Naive thymus-derived CD4-positive, alpha-beta T cell (primary cell): ENCODE measurements at regions of chr14 and their contacts with region 1.

Region 1: DNA sequence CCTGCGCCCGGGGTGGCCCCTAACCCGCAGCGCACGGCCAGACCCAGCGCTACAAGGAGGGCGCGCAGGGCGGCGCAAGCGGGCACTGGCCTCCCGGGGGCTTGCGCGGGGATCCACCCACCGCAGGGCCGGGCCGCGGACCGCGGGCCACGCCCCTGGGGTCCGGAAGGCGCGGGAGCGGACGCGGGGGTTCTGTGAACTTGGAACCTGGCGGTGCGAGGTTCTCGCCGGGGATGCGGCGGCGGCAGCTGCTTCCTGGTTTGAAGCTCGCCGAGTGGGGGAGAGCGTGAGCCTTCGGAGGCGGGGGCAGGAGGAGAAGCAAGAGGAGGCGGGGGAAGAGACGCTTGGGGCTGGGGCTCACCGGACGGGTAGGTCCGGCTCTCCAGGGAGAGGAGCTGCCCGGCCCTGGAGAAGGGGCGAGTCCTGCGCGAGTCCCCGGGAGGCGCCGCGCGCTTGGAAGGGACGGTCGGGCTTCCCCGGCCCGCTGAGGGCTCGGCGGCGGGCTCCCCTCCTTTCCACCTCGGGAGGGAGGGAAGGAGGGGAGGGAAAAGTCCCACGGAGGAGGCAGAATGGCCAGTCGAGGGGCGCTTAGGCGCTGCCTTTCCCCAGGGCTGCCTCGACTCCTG is at the start of gene PRKCH:
- DNase-seq: peak; percentile 67 to 87 (median 84)
- ATAC-seq: peak; percentile 87
- H3K4me3 ChIP-seq: peak within 1 kb of the TSS; percentile 90
- H3K4me3 Mint-ChIP-seq: peak within 1 kb of the TSS in 9 of 10 donors; percentile 95 to 100 (median 98)
- H3K27ac ChIP-seq: peak within 1 kb of the TSS; percentile 91
- H3K27ac Mint-ChIP-seq: peak within 1 kb of the TSS in 8 of 9 donors; percentile 93 to 99 (median 97)
- H3K4me1 ChIP-seq: peaks cover 20 to 22% of the 10 kb centered on the region in 2 donors
- H3K4me1 Mint-ChIP-seq: peaks cover 9 to 26% (median 25%) of the 10 kb centered on the region in 7 donors
- H3K27me3 ChIP-seq: no peaks in the 10 kb centered on the region
- H3K27me3 Mint-ChIP-seq: no peaks in the 10 kb centered on the region
- total RNA-seq, gene PRKCH: 224 to 359 (median 320) TPM

Region 2: DNA sequence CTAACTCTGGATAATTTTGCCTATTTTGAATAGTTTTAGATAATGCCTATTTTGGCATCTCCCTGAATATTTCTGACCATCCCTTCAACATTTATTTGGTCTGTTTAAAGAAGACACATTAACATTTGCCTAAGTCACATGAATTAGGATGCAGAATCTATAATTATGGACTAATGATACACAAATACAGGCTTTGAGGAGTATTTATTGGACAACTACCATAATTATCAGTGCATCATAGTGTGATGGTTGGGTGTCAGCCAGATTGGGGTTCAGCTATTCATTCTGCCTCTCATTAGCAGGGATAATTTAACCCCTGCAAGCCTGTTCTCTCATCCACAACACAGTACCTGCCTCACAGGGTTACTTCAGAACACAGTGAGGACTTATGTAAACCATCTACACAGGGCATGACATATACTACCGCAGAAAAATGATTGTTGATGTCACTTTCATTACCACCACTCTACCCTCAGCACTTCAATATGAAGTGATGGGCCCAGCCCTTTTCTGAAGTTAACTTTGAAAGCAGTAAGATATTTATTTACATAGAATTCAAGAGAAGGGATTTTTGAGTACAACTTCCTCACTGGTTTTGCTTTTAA is 14.3 kb after region 1 on chr14:
- CTCF ChIA-PET with region 1: interaction called, 15 read pairs
- POLR2A ChIA-PET with region 1: interaction called, 214 read pairs
- intact Hi-C with region 1: loop called (anchors 1 kb)
- DNase-seq: peak in 7 of 9 donors; percentile 55 to 84 (median 78)
- ATAC-seq: peak; percentile 77
- H3K4me3 ChIP-seq: peak overlapping the region; percentile 4
- H3K4me3 Mint-ChIP-seq: peak overlapping the region; percentile 65 to 97 (median 84)
- H3K27ac ChIP-seq: peak overlapping the region; percentile 94
- H3K27ac Mint-ChIP-seq: peak overlapping the region in 8 of 9 donors; percentile 96 to 100 (median 100)
- H3K4me1 ChIP-seq: peaks cover 80 to 86% of the 10 kb centered on the region in 2 donors
- H3K4me1 Mint-ChIP-seq: peaks cover 60 to 88% (median 77%) of the 10 kb centered on the region in 7 donors
- H3K27me3 ChIP-seq: no peaks in the 10 kb centered on the region
- H3K27me3 Mint-ChIP-seq: no peaks in the 10 kb centered on the region

Region 3: GRCh38 chr14:61381547-61381946 is 60.0 kb after region 1 on chr14:
- CTCF ChIA-PET with region 1: interaction called, 5 read pairs
- POLR2A ChIA-PET with region 1: interaction called, 12 read pairs
- intact Hi-C with region 1: loop called (anchors 2 kb)
- DNase-seq: no peak
- ATAC-seq: no peak
- H3K4me3 ChIP-seq: no peak overlapping the region
- H3K4me3 Mint-ChIP-seq: peak overlapping the region in 8 of 10 donors; percentile 7 to 69 (median 59)
- H3K27ac ChIP-seq: peak overlapping the region; percentile 32
- H3K27ac Mint-ChIP-seq: peak overlapping the region in 6 of 9 donors; percentile 24 to 93 (median 86)
- H3K4me1 ChIP-seq: peaks cover 97 to 99% of the 10 kb centered on the region in 2 donors
- H3K4me1 Mint-ChIP-seq: peaks cover 0 to 56% (median 46%) of the 10 kb centered on the region in 7 donors
- H3K27me3 ChIP-seq: no peaks in the 10 kb centered on the region
- H3K27me3 Mint-ChIP-seq: no peaks in the 10 kb centered on the region

Region 4: DNA sequence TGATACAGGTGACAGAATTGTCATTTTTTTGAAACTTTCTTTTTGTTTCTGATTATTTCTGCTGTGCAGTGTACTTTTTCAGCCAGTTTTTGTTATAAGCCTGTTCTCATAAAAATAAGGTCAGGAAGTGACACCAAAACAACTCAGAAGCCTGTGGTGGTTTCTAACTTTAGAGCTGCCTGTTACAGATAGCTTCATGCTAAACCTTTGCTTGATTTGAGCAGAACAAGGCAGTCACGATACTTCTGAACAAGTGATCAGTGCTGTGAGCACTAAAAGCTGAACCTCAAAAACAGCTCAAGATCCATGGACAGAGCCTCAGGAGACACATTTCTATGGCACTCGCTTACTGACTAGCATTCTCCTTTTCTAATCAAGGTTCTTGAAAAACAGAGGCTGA is 81.9 kb after region 1 on chr14:
- CTCF ChIA-PET with region 1: interaction called, 4 read pairs
- POLR2A ChIA-PET with region 1: interaction called, 6 read pairs
- intact Hi-C with region 1: loop called in 1 of 2 experiments (anchors 1 kb)
- DNase-seq: peak in 7 of 9 donors; percentile 52 to 79 (median 67)
- ATAC-seq: peak; percentile 89
- H3K4me3 ChIP-seq: peak overlapping the region; percentile 3
- H3K4me3 Mint-ChIP-seq: peak overlapping the region; percentile 17 to 84 (median 76)
- H3K27ac ChIP-seq: peak overlapping the region; percentile 71
- H3K27ac Mint-ChIP-seq: peak overlapping the region in 8 of 9 donors; percentile 76 to 96 (median 91)
- H3K4me1 ChIP-seq: peaks cover 84 to 88% of the 10 kb centered on the region in 2 donors
- H3K4me1 Mint-ChIP-seq: peaks cover 0 to 93% (median 70%) of the 10 kb centered on the region in 7 donors
- H3K27me3 ChIP-seq: no peaks in the 10 kb centered on the region
- H3K27me3 Mint-ChIP-seq: no peaks in the 10 kb centered on the region

Region 5: GRCh38 chr14:61456720-61457119 is 135.2 kb after region 1 on chr14:
- CTCF ChIA-PET with region 1: interaction called, 6 read pairs
- POLR2A ChIA-PET with region 1: interaction called, 17 read pairs
- intact Hi-C with region 1: loop called (anchors 1 kb)
- DNase-seq: peak; percentile 63 to 82 (median 77)
- ATAC-seq: peak; percentile 76
- H3K4me3 ChIP-seq: no peak overlapping the region
- H3K4me3 Mint-ChIP-seq: peak overlapping the region in 5 of 10 donors; percentile 5 to 80 (median 51)
- H3K27ac ChIP-seq: peak overlapping the region; percentile 32
- H3K27ac Mint-ChIP-seq: peak overlapping the region in 8 of 9 donors; percentile 70 to 92 (median 86)
- H3K4me1 ChIP-seq: peaks cover 53 to 59% of the 10 kb centered on the region in 2 donors
- H3K4me1 Mint-ChIP-seq: peaks cover 52 to 93% (median 89%) of the 10 kb centered on the region in 7 donors
- H3K27me3 ChIP-seq: no peaks in the 10 kb centered on the region
- H3K27me3 Mint-ChIP-seq: no peaks in the 10 kb centered on the region